Panc1 (cell line): ENCODE measurements at regions of chr6 and their contacts with region 1.

Region 1: GRCh38 chr6:82616386-82617028 is 252.9 kb downstream of the TPBG start:
- DNase-seq: no peak
- ATAC-seq: no peak
- H3K4me3 ChIP-seq: no peak overlapping the region
- H3K27ac ChIP-seq: no peak overlapping the region
- H3K4me1 ChIP-seq: no peaks in the 10 kb centered on the region
- H3K27me3 ChIP-seq: no peaks in the 10 kb centered on the region
- CTCF ChIP-seq: peak; percentile 16; the same call in 1 of the 2 replicates

Region 2: DNA sequence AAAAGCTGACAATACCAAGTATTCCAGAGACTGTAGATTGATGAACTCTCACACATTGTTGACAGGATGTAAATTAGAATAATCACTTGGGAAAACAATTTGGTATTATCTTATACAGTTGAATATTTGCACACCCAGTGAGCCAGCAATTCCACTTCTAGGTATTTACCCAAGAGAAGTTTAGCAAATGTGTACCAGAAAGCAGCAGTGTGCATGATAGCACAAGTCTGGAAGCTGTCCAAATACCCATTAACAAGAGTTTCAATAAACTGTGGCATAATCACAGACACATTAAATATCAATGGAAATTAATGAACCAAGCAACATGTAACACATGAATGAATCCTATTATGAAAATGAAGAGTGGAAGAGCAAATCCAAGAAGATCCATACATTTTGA is 19.3 kb before region 1 on chr6:
- CTCF ChIA-PET with region 1: interaction called, 15 read pairs
- POLR2A ChIA-PET with region 1: no interaction called
- in situ Hi-C with region 1: no loop called
- intact Hi-C with region 1: no loop called
- DNase-seq: no peak
- ATAC-seq: no peak
- H3K4me3 ChIP-seq: no peak overlapping the region
- H3K27ac ChIP-seq: no peak overlapping the region
- H3K4me1 ChIP-seq: no peaks in the 10 kb centered on the region
- H3K27me3 ChIP-seq: no peaks in the 10 kb centered on the region
- CTCF ChIP-seq: no peak